ENCODE measurements at regions of chr15 and their contacts with region 1.

Region 1: DNA sequence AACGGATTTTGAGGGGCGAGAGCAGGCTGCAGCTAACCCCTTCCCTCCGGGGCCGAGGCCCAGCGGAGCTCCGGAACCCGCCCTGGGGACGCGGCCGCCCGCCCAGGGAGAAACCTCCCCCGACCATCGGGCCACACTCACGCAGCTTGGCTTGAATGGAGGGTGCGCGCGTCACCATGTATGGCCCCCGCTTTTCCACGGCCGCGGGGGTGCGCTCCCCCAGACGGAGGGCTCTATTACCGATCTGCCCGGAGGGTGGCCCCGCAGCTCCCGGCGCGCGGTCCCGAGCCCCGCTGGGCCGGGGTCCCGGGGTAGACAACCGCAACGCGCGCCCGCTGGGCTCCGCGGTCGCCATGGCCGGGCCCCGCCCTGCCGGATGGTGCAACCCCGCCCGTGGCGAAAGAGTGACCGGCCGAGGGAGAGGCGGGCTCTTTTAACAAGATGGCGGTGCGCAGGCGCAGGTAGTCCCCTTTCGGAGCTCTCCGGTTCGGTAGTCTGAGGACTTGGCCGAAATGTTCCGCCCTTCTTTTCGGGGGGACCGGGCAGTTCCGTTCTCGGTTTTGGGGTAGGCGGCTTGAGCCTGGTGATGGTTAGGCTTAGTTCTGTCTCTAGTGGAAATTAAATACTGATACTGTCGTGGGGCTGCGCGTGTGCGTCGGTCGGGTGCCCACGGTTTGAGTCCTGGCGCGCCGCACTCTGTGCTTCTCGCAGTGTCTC is at the start of gene FAM219B:
- DNase-seq: peak; percentile 59 to 95
- H3K4me3 ChIP-seq: peak within 1 kb of the TSS; percentile 86 to 98
- H3K27ac ChIP-seq: peak within 1 kb of the TSS; percentile 95 to 97
- H3K4me1 ChIP-seq: peaks cover 8 to 20% of the 10 kb centered on the region in 2 donors
- H3K27me3 ChIP-seq: no peaks in the 10 kb centered on the region
- CTCF ChIP-seq: no peak
- total RNA-seq, gene FAM219B: 17.5 TPM

Region 2: GRCh38 chr15:74598126-74598842 is 308.3 kb before region 1 on chr15:
- intact Hi-C with region 1: no loop called
- DNase-seq: peak; percentile 79 to 95
- H3K4me3 ChIP-seq: peak overlapping the region; percentile 50 to 76
- H3K27ac ChIP-seq: peak overlapping the region; percentile 48 to 77
- H3K4me1 ChIP-seq: peaks cover 0 to 6% of the 10 kb centered on the region in 2 donors
- H3K27me3 ChIP-seq: no peaks in the 10 kb centered on the region
- CTCF ChIP-seq: no peak

Region 3: GRCh38 chr15:74842581-74843444 is 63.8 kb before region 1 on chr15 and contains the start of gene ULK3:
- intact Hi-C with region 1: loop called (anchors 1 kb)
- DNase-seq: peak; percentile 70 to 95
- H3K4me3 ChIP-seq: peak within 1 kb of the TSS; percentile 70 to 95
- H3K27ac ChIP-seq: peak within 1 kb of the TSS; percentile 75 to 78
- H3K4me1 ChIP-seq: peaks cover 4 to 7% of the 10 kb centered on the region in 2 donors
- H3K27me3 ChIP-seq: no peaks in the 10 kb centered on the region
- CTCF ChIP-seq: peak; percentile 66 to 90 (median 68)
- total RNA-seq, gene ULK3: 54.0 TPM

Region 4: GRCh38 chr15:74873036-74873755 is 33.4 kb before region 1 on chr15 and contains the start of gene SCAMP2:
- intact Hi-C with region 1: loop called (anchors 2 kb)
- DNase-seq: peak; percentile 84 to 97
- H3K4me3 ChIP-seq: peak within 1 kb of the TSS; percentile 48 to 80
- H3K27ac ChIP-seq: peak within 1 kb of the TSS; percentile 83 to 94
- H3K4me1 ChIP-seq: peaks cover 9 to 40% of the 10 kb centered on the region in 2 donors
- H3K27me3 ChIP-seq: no peaks in the 10 kb centered on the region
- CTCF ChIP-seq: no peak
- total RNA-seq, gene SCAMP2: 90.8 TPM

Region 5: GRCh38 chr15:74889883-74890664 is 16.5 kb before region 1 on chr15 and contains the start of gene MPI:
- intact Hi-C with region 1: loop called (anchors 1 kb)
- DNase-seq: peak; percentile 47 to 89
- H3K4me3 ChIP-seq: peak within 1 kb of the TSS; percentile 76 to 85
- H3K27ac ChIP-seq: peak within 1 kb of the TSS; percentile 70 to 76
- H3K4me1 ChIP-seq: peaks cover 4 to 13% of the 10 kb centered on the region in 2 donors
- H3K27me3 ChIP-seq: no peaks in the 10 kb centered on the region
- CTCF ChIP-seq: no peak
- total RNA-seq, gene MPI: 118 TPM

Region 6: DNA sequence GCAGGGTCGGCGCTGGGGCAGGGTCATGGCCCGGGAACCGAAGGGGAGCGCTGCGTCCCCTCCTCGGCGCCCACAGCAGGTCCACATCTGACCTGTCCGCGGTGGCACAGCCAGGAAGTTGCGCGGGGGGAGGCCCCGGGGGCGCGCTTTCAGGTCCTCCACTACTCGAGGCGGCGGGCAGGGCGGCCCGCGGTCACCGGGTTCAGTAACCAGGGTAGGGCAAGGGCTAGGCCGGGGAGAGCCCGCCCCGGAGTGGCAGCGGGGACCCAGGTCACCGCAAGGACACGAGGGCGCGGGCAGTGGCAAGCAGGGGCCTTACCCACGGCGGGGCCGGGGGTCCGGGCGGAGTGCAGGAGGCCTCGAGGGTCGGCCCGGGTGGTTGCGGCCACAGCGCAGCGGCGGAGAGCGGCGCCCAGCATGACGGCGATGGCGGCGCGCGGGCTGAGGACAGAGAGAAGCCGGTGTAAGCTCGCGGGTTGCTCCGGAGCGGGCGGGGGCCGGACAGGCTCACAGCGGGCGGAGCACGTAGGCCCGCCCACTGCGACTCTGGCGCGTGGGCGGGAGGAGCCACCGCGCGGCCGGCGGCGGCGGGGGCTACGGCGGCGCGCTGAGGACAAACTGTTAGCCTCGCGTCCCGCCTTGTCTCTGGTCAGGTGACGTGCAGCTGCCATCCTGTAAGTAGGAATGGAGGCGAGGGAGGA is 31.1 kb after region 1 on chr15 and contains the start of gene COX5A:
- intact Hi-C with region 1: loop called (anchors 1 kb)
- DNase-seq: peak; percentile 87 to 97
- H3K4me3 ChIP-seq: peak within 1 kb of the TSS; percentile 80 to 83
- H3K27ac ChIP-seq: peak within 1 kb of the TSS; percentile 87 to 88
- H3K4me1 ChIP-seq: peaks cover 8 to 24% of the 10 kb centered on the region in 2 donors
- H3K27me3 ChIP-seq: no peaks in the 10 kb centered on the region
- CTCF ChIP-seq: peak in 1 of 3 experiments; percentile 43
- total RNA-seq, gene COX5A: 83.5 TPM

Region 7: GRCh38 chr15:74956648-74957300 is 50.2 kb after region 1 on chr15 and contains the start of gene RPP25:
- intact Hi-C with region 1: loop called (anchors 1 kb)
- DNase-seq: peak; percentile 36 to 89
- H3K4me3 ChIP-seq: peak within 1 kb of the TSS; percentile 71 to 84
- H3K27ac ChIP-seq: peak within 1 kb of the TSS; percentile 91 to 94
- H3K4me1 ChIP-seq: peaks cover 7 to 16% of the 10 kb centered on the region in 2 donors
- H3K27me3 ChIP-seq: no peaks in the 10 kb centered on the region
- CTCF ChIP-seq: no peak
- total RNA-seq, gene RPP25: 28.4 TPM